ENCODE measurements at regions of chr14 and their contacts with region 1.

Region 1: GRCh38 chr14:101628471-101628966 is 67.2 kb downstream of the DIO3 start:
- DNase-seq: peak; percentile 67
- H3K4me3 ChIP-seq: peak overlapping the region in 2 of 3 experiments; percentile 27 to 37
- H3K27ac ChIP-seq: no peak overlapping the region
- H3K4me1 ChIP-seq: peaks cover 8% of the 10 kb centered on the region
- H3K27me3 ChIP-seq: no peaks in the 10 kb centered on the region
- CTCF ChIP-seq: peak; percentile 66 to 89

Region 2: GRCh38 chr14:100417466-100417865 is 1211.1 kb before region 1 on chr14:
- CTCF ChIA-PET with region 1: no interaction called
- dilution Hi-C with region 1: no loop called
- in situ Hi-C with region 1: loop called in 1 of 2 experiments (anchors 25 kb)
- intact Hi-C with region 1: no loop called
- DNase-seq: peak; percentile 84
- H3K4me3 ChIP-seq: no peak overlapping the region
- H3K27ac ChIP-seq: peak overlapping the region; percentile 60
- H3K4me1 ChIP-seq: peaks cover 16% of the 10 kb centered on the region
- H3K27me3 ChIP-seq: no peaks in the 10 kb centered on the region
- CTCF ChIP-seq: peak; percentile 88 to 89

Region 3: GRCh38 chr14:100547633-100548294 is 1080.8 kb before region 1 on chr14:
- CTCF ChIA-PET with region 1: no interaction called
- dilution Hi-C with region 1: loop called (anchors 10 kb)
- in situ Hi-C with region 1: no loop called
- intact Hi-C with region 1: no loop called
- DNase-seq: no peak
- H3K4me3 ChIP-seq: no peak overlapping the region
- H3K27ac ChIP-seq: no peak overlapping the region
- H3K4me1 ChIP-seq: peaks cover 5% of the 10 kb centered on the region
- H3K27me3 ChIP-seq: no peaks in the 10 kb centered on the region
- CTCF ChIP-seq: no peak

Region 4: GRCh38 chr14:100654814-100655740 is 973.4 kb before region 1 on chr14:
- CTCF ChIA-PET with region 1: no interaction called
- dilution Hi-C with region 1: loop called (anchors 5 kb)
- in situ Hi-C with region 1: loop called (anchors 10 to 25 kb)
- intact Hi-C with region 1: no loop called
- DNase-seq: peak; percentile 12
- H3K4me3 ChIP-seq: no peak overlapping the region
- H3K27ac ChIP-seq: no peak overlapping the region
- H3K4me1 ChIP-seq: peaks cover 5% of the 10 kb centered on the region
- H3K27me3 ChIP-seq: no peaks in the 10 kb centered on the region
- CTCF ChIP-seq: peak; percentile 47 to 86

Region 5: DNA sequence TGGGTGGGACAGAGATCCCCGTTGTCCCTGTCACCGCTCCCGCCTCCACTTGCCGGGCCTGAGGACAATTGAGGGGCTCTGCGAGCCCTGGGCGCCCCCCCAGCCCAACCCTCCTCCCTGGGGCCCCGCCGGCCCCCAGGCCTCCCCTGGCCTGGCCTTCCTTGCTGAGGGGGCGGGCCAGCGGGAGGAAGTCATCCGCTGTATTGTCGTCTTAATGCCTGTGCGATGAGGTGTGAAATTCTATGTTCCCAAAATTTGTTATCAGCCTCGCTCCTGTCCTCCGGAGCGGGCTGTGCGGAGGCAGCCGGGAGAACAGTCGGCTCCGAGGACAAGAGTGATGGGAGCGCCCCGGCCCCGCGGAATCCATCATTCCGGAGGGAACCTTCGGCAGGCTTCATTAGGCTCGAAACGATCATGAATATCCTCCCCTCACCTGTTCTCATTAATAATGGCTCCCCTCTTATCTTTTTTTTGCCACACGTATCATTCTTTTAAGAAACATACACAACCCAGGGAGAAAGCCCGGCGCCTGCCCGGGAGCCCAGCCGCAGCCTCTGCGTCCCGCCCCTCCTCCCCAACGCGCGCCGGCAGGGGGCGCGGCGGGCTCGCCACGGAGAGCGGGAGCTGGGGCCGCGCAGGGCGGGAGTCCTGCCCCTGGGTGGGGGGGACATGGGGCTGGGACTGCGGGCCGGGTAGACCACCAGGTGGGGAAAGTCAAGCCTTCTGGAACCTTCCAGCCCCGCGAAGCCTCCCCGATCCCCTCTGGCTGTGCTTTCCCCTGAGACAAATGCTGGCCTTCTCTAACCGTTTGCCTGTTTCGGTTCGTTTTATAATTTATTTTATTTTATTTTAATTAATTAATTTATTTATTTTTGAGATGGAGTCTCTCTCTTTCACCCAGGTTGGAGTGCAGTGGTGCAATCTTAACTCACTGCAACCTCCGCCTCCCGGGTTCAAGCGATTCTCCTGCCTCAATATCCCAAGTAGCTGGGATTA is 918.9 kb before region 1 on chr14:
- CTCF ChIA-PET with region 1: no interaction called
- dilution Hi-C with region 1: no loop called
- in situ Hi-C with region 1: no loop called
- intact Hi-C with region 1: loop called (anchors 2 kb)
- DNase-seq: no peak
- H3K4me3 ChIP-seq: no peak overlapping the region
- H3K27ac ChIP-seq: no peak overlapping the region
- H3K4me1 ChIP-seq: peaks cover 13% of the 10 kb centered on the region
- H3K27me3 ChIP-seq: no peaks in the 10 kb centered on the region
- CTCF ChIP-seq: peak in 1 of 2 donors; percentile 28

Region 6: DNA sequence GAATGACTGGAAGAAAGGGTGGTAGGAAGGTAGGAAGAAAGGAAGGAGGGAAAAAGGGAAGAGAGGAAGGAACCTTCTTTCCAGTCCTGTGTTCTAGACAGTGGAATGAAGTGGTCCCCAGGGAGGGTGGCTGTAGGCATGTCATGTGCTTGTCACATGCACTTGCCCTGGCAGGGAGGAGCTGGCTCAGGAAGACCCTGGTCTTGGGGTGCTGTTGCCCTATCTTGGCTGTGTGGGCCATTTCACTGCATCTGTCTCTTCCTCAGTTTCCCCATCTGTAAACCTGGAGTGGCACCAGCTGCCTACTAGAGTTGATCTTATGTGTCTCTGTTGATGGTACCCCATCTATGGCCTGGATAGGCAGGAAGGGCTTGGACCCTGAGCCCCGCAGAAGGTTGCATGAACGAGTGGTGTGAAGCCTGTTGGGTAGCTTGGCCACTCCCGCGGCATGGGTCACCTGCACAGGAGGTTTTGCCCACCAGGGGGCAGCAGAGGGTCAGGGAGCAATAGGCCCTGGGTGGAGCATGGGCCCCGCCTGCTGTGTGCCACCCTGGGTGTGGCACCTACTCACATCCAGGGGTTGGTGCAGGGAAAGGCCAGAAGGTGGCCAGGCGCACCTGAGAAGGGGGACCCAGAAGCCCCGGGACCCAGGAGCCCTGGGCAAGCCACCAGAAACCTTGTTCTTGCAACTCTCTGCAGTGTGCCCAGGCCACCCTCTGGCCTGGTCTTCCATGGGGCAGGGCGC is 777.5 kb before region 1 on chr14:
- CTCF ChIA-PET with region 1: no interaction called
- dilution Hi-C with region 1: loop called (anchors 5 kb)
- in situ Hi-C with region 1: loop called in 1 of 2 experiments (anchors 25 kb)
- intact Hi-C with region 1: loop called (anchors 1 kb)
- DNase-seq: peak; percentile 27
- H3K4me3 ChIP-seq: no peak overlapping the region
- H3K27ac ChIP-seq: no peak overlapping the region
- H3K4me1 ChIP-seq: no peaks in the 10 kb centered on the region
- H3K27me3 ChIP-seq: no peaks in the 10 kb centered on the region
- CTCF ChIP-seq: peak; percentile 75 to 89

Measured in mammary epithelial cell (primary cell).